ENCODE measurements at regions of chr3 and their contacts with region 1.

Region 1: DNA sequence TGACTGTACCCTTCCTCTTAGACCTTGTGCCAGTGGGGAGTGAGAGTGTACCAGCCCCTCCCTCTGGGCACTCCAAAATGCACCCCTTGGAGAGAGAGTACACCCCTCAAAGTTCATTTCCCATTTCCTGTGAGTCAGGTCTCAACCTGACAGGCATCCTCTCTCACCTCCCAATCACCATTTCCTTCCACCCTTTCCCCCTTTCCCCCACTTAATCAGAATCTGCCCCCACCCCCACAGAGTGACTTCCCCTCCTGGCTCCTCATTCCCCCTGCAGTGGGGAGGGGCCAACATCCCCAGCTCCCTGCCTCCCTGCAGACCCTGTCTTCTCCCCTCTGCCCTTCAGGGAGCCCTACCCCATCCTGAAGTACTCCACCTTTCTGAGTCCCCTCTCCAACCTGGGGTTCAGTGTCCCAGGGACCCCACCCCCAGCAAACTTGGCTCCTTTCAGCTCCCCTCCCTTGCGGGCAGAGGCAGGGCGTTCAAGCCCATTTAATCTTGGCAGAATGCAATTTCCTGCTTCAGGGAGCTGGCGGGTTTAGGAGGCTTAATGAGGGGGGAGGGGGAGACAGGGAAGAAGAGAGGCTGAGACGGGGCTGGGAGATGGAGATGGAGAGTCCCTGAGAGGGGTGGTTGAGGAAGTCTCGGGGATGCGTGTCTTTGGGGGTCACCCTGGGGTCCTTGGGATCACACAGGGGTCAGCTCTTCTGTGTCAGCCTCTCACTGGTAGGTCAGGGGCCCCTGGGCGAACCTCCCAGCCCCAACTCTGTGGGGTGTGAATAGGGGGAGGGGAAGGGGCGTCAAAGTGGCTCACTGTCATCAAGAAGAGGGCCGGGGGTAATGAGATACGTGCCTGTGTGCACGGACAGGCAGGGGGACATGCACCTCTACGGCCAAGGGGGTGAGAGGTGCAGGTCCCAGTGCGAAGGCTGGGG is 16.6 kb upstream of the SEMA3F start:
- DNase-seq: no peak
- CTCF ChIP-seq: no peak

Region 2: DNA sequence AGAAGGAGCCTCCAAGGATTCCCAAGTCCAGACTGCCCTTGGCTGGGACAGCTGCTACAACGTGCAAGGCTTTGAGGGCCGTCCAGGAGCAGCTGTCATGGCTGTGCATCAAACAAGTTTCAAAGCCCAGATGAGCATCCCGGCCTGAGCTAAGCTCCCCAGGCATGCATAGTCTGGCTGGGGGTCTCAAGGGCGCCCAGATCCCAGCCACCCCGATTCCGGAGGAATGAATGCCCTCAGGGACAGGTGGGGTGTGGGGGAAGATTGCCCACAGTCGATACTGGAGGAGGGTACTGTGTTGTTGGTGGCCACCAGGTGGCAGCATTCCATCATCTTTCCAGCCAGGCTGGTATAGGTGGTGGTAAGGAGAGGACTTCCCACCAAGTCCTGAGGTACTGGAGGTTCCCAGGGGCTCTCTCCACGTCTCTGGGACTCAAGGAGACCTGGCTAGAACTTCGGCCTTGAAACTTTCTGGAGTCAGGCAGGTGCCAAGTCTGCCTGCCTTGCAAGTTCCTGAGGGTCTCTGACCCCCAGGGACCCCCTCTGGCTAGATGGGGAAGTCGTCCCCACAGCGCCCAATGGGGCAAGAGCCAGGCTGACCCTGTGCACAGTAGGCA is 17.0 kb before region 1 on chr3:
- CTCF ChIA-PET with region 1: interaction called, 16 read pairs
- POLR2A ChIA-PET with region 1: interaction called, 3 read pairs
- DNase-seq: peak; percentile 87
- CTCF ChIP-seq: peak; percentile 62

Region 3: DNA sequence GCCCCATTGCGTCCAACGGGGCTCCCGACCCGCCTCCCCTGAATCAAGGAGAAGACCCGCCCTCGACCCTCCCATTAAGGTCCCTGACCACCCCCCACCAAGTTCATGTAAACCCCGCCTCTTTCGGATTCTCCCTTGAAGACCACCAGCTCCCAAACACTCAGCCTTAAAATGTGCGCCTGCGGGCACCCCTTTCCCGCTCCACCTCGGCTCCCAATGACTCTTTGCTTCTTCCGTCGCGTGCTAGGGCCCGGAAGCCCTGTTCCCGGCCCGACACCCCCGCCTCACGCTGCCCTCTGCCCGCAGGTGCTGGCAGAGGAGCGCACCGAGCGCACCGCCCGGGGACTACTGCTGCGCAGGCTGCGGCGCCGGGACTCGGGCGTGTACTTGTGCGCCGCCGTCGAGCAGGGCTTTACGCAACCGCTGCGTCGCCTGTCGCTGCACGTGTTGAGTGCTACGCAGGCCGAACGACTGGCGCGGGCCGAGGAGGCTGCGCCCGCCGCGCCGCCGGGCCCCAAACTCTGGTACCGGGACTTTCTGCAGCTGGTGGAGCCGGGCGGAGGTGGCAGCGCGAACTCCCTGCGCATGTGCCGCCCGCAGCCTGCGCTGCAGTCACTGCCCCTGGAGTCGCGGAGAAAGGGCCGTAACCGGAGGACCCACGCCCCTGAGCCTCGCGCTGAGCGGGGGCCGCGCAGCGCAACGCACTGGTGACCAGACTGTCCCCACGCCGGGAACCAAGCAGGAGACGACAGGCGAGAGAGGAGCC is 137.6 kb after region 1 on chr3:
- CTCF ChIA-PET with region 1: no interaction called
- POLR2A ChIA-PET with region 1: no interaction called
- DNase-seq: no peak
- CTCF ChIP-seq: no peak

Region 4: GRCh38 chr3:50347194-50347918 is 208.8 kb after region 1 on chr3:
- CTCF ChIA-PET with region 1: no interaction called
- POLR2A ChIA-PET with region 1: no interaction called
- DNase-seq: peak; percentile 63
- CTCF ChIP-seq: peak; percentile 56